ENCODE measurements at regions of chr21 and their contacts with region 1.

Region 1: DNA sequence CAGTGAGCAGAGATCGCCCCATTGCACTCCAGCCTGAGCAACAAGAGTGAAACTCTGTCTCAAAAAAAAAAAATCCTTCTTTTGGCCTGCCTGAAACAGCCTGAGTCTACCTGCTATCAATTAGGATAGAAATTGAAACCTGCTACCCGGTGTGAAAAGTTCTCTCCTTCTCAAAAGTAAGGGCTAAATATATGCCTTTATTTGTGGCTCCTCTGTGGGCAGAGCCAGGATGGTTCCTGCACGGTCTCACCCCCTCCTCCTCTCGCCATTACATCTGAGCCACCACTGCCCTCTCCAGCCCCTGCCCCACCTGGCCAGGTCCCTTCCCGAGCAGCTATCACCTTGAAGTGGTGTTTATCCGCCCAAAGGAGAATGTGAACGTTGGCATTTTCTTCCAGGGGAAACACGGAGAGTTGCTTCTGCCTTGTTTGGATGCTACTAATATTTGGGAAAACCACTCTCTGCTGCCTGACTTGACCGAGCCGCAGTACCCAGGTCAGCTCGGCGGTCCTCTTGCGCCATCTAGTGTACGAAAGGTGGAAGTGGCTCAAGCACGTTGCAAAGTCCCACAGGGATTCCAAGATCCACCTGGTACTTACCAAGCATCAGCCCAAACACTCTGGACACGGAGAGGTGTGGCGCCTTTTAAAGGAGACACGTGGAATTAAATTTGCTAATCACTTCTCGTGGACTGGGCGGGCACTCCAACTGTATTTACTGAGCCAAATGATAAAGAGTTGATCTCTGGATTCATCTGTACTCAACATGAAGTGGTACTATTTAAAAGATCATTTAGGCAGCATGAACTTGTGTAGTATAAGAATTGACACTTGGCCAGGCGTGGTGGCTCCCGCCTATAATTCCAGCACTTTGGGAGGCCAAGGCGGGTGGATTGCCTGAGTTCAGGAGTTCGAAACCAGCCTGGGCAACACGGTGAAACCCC is 31.9 kb downstream of the SETD4 start:
- DNase-seq: peak; percentile 57 to 63
- ATAC-seq: peak; percentile 75 to 96 (median 88)
- H3K4me3 ChIP-seq: no peak overlapping the region
- H3K27ac ChIP-seq: no peak overlapping the region
- H3K4me1 ChIP-seq: peaks cover 0 to 8% (median 0%) of the 10 kb centered on the region in 9 donors
- H3K27me3 ChIP-seq: no peaks in the 10 kb centered on the region
- CTCF ChIP-seq: peak; percentile 91 to 97 (median 95)

Region 2: GRCh38 chr21:34688145-34688544 is 1340.3 kb before region 1 on chr21:
- intact Hi-C with region 1: loop called in 5 of 10 experiments (anchors 2 to 10 kb)
- DNase-seq: peak in 1 of 2 donors; percentile 38
- ATAC-seq: peak in 1 of 8 donors; percentile 15
- H3K4me3 ChIP-seq: no peak overlapping the region
- H3K27ac ChIP-seq: no peak overlapping the region
- H3K4me1 ChIP-seq: peaks cover 0 to 17% (median 5%) of the 10 kb centered on the region in 9 donors
- H3K27me3 ChIP-seq: peaks cover 0 to 18% (median 0%) of the 10 kb centered on the region in 7 donors
- CTCF ChIP-seq: peak in 5 of 9 donors; percentile 14 to 78 (median 57)

Region 3: DNA sequence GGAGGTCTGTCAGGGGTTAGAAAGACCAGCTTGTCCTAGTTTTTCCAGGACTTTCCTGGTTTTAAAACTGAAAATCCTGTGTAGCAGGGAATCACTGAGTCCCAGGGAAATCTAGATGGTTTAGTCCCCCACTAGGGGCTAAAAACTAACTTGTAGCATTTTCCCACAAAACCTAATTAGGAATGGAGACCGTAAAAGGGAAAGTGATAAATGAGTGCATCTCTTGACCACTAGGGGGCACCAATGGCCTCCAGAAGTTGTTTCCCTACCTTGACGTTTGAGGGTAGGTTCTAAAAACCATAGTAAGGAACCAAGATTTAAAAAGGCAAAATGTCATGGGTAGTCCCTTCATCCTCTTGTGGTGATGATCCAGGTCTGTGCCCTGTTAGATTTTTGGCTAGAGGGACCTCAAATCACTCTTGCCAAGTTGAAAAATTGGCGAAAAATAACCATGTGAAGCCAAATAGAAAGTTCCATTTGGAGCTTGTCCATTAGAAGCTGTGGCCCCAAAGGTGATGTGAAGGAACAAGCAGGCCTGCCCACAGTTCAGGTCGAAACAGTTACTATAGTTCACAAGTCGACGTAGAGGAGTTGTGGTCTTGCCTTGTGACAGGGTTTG is 1335.1 kb before region 1 on chr21:
- intact Hi-C with region 1: loop called in 5 of 10 experiments (anchors 2 to 10 kb)
- DNase-seq: peak in 1 of 2 donors; percentile 29
- ATAC-seq: peak in 1 of 8 donors; percentile 26
- H3K4me3 ChIP-seq: no peak overlapping the region
- H3K27ac ChIP-seq: no peak overlapping the region
- H3K4me1 ChIP-seq: peaks cover 0 to 17% (median 5%) of the 10 kb centered on the region in 9 donors
- H3K27me3 ChIP-seq: peaks cover 0 to 16% (median 0%) of the 10 kb centered on the region in 7 donors
- CTCF ChIP-seq: peak; percentile 56 to 85 (median 76)

Region 4: GRCh38 chr21:35840197-35840799 is 188.1 kb before region 1 on chr21:
- intact Hi-C with region 1: loop called in 1 of 10 experiments (anchors 10 kb)
- DNase-seq: peak in 1 of 2 donors; percentile 67
- ATAC-seq: peak in 7 of 8 donors; percentile 42 to 81 (median 63)
- H3K4me3 ChIP-seq: no peak overlapping the region
- H3K27ac ChIP-seq: no peak overlapping the region
- H3K4me1 ChIP-seq: peaks cover 0 to 12% (median 2%) of the 10 kb centered on the region in 9 donors
- H3K27me3 ChIP-seq: peaks cover 0 to 5% (median 0%) of the 10 kb centered on the region in 7 donors
- CTCF ChIP-seq: peak; percentile 65 to 91 (median 83)

Region 5: GRCh38 chr21:35885942-35886541 is 142.4 kb before region 1 on chr21:
- intact Hi-C with region 1: loop called in 1 of 10 experiments (anchors 5 kb)
- DNase-seq: no peak
- ATAC-seq: peak in 1 of 8 donors; percentile 7
- H3K4me3 ChIP-seq: no peak overlapping the region
- H3K27ac ChIP-seq: no peak overlapping the region
- H3K4me1 ChIP-seq: no peaks in the 10 kb centered on the region
- H3K27me3 ChIP-seq: peaks cover 0 to 24% (median 9%) of the 10 kb centered on the region in 7 donors
- CTCF ChIP-seq: peak in 3 of 9 donors; percentile 8 to 27 (median 27)

Region 6: DNA sequence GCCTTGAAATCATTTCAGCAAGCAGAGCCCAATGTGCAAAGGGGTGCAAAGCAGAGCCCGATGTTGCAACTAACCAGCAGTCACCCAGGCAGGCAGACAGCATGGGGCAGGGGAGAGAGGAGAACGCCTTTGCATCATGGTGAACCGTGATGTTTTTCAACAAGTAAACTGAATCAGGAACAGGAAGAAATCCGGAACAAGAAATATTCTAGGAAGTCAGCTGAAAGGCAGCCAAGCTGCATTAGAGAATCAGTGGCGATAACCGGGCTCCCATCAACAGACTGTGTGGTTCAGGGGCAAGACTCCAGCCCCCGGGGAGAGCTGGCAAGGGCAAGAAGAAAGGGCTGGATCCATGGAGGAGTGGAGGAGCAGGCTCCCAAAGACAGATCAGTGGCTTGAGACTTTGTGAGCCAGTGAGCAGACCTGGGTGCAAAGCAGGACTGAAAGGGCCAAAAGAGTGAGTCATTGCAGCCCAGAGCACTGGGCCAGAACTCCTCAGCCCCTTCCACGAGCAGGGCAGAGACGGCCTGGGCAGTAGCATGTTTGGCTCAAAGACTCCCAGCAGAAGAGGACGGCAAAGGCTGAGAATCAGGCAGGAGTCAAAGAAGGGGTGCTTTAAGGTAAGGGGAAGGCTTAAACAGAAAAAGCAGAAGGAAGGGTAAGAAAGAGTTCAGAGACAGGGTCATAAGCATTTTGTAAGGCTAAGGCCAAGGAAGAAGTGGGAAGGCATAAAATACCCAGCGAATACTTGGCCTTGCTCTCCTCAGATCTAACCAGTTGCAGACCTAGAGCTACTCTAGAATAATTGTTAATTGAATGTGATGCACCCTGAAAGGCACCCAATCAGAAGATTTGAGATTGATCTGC is 123.1 kb before region 1 on chr21:
- intact Hi-C with region 1: no loop called
- DNase-seq: peak in 1 of 2 donors; percentile 27
- ATAC-seq: peak; percentile 38 to 95 (median 73)
- H3K4me3 ChIP-seq: peak overlapping the region in 1 of 10 donors; percentile 18
- H3K27ac ChIP-seq: peak overlapping the region in 8 of 10 donors; percentile 31 to 87 (median 44)
- H3K4me1 ChIP-seq: peaks cover 0 to 22% (median 0%) of the 10 kb centered on the region in 9 donors
- H3K27me3 ChIP-seq: no peaks in the 10 kb centered on the region
- CTCF ChIP-seq: no peak